Activated CD4-positive, alpha-beta T cell treated with anti-CD3 and anti-CD28 coated beads for 36 hours (primary cell): ENCODE measurements at regions of chr5 and their contacts with region 1.

Region 1: GRCh38 chr5:169795338-169795737 is 158.3 kb downstream of the DOCK2 start:
- DNase-seq: peak; percentile 27
- ATAC-seq: no peak
- H3K4me3 Mint-ChIP-seq: no peak overlapping the region
- H3K27ac Mint-ChIP-seq: no peak overlapping the region
- H3K4me1 Mint-ChIP-seq: peaks cover 24% of the 10 kb centered on the region
- H3K27me3 Mint-ChIP-seq: no peaks in the 10 kb centered on the region

Region 2: GRCh38 chr5:168978015-168978414 is 817.3 kb before region 1 on chr5:
- CTCF ChIA-PET with region 1: no interaction called
- POLR2A ChIA-PET with region 1: no interaction called
- intact Hi-C with region 1: no loop called
- DNase-seq: no peak
- ATAC-seq: peak; percentile 90
- H3K4me3 Mint-ChIP-seq: no peak overlapping the region
- H3K27ac Mint-ChIP-seq: no peak overlapping the region
- H3K4me1 Mint-ChIP-seq: peaks cover 2% of the 10 kb centered on the region
- H3K27me3 Mint-ChIP-seq: peaks cover 24% of the 10 kb centered on the region

Region 3: GRCh38 chr5:169980418-169981053 is 185.2 kb after region 1 on chr5 and contains the start of gene INSYN2B:
- CTCF ChIA-PET with region 1: interaction called, 3 read pairs
- POLR2A ChIA-PET with region 1: no interaction called
- intact Hi-C with region 1: loop called in 1 of 2 experiments (anchors 5 kb)
- DNase-seq: peak; percentile 59
- ATAC-seq: peak; percentile 69
- H3K4me3 Mint-ChIP-seq: no peak within 1 kb of the TSS
- H3K27ac Mint-ChIP-seq: no peak within 1 kb of the TSS
- H3K4me1 Mint-ChIP-seq: no peaks in the 10 kb centered on the region
- H3K27me3 Mint-ChIP-seq: no peaks in the 10 kb centered on the region
- total RNA-seq, gene INSYN2B: not detected

Region 4: GRCh38 chr5:170302653-170303501 is 507.5 kb after region 1 on chr5:
- CTCF ChIA-PET with region 1: no interaction called
- POLR2A ChIA-PET with region 1: no interaction called
- intact Hi-C with region 1: no loop called
- DNase-seq: peak; percentile 75
- ATAC-seq: peak; percentile 87
- H3K4me3 Mint-ChIP-seq: peak overlapping the region; percentile 70
- H3K27ac Mint-ChIP-seq: peak overlapping the region; percentile 92
- H3K4me1 Mint-ChIP-seq: peaks cover 91% of the 10 kb centered on the region
- H3K27me3 Mint-ChIP-seq: no peaks in the 10 kb centered on the region